ENCODE measurements at regions of chr19 and their contacts with region 1.

Region 1: DNA sequence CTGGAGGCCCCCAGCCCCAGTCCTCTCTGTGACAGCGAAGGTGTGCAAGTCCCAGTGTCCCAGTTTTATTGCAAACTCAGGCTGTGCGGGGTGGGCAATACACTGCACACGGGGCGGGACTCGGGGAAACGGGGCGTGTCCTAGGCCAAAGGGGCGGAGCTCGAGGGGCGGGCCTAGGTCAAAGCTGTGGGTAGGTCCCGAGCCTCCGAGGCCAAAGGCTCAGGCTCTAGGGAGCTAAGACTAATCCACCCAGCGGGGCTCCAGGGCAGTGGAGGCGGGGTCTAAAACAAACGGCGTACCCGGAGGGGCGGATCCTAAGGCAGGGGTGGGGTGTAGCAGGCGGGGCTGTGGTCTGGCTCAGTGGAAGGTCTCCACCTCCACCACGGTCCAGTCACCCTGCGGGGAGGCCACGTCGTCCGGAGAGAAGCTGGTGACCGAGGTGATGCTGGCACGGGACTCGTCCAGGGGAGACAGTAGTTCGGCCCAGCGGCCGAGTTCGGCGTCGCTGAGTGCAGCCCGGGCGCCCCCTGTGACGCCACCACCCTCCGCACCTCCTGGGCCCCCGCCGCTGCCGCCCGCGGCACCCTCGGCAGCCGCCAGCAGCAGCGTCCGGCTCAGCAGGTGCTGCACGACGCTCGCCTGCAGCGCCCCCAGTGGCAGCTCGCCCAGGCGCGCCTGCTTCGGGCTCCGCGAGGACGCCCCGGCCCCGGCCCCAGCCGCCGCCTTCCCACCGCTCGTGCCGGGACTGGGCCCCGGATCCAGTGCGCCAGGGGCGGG is 5.3 kb downstream of the PRR36 start:
- DNase-seq: peak; percentile 82
- H3K4me3 Mint-ChIP-seq: peak overlapping the region; percentile 60
- H3K27ac Mint-ChIP-seq: no peak overlapping the region
- H3K4me1 Mint-ChIP-seq: peaks cover 44% of the 10 kb centered on the region
- H3K27me3 Mint-ChIP-seq: peaks cover 50% of the 10 kb centered on the region

Region 2: GRCh38 chr19:7792253-7792652 is 76.6 kb before region 1 on chr19:
- CTCF ChIA-PET with region 1: no interaction called
- POLR2A ChIA-PET with region 1: no interaction called
- DNase-seq: no peak
- H3K4me3 Mint-ChIP-seq: no peak overlapping the region
- H3K27ac Mint-ChIP-seq: no peak overlapping the region
- H3K4me1 Mint-ChIP-seq: no peaks in the 10 kb centered on the region
- H3K27me3 Mint-ChIP-seq: peaks cover 35% of the 10 kb centered on the region

Region 3: DNA sequence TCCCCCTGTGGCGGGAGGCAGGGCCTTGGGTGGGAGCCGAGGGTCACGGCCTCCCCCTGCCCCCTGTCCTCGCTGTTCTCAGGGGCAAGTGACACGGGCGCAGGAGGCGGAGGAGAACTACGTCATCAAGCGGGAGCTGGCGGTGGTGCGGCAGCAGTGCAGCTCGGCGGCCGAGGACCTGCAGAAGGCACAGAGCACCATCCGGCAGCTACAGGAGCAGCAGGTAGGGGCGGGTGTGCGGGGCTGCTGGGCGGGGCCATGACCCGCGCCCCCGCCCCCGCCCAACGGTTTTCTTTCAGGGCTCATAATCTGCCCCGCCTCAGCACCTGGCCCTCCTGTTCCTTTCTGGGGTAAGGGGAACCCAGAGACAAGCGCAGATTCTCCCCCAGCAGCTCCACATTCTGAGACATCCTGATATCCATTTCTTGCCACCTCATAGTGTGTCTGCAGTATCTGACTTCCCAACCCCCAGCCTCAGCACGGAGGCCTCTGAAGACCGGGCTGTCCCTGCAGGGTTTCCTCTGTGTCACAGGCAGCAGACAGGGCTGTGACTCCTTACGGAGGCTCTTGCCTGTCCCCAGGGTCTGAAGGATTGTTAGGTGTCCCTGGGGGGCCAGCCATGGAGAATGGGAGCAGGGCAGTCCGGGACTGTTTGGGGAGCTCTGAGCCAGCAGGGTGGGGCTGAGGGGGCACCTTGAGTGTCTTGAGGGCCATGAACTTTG is 10.6 kb before region 1 on chr19:
- CTCF ChIA-PET with region 1: interaction called, 25 read pairs
- POLR2A ChIA-PET with region 1: interaction called, 4 read pairs
- DNase-seq: no peak
- H3K4me3 Mint-ChIP-seq: no peak overlapping the region
- H3K27ac Mint-ChIP-seq: no peak overlapping the region
- H3K4me1 Mint-ChIP-seq: peaks cover 5% of the 10 kb centered on the region
- H3K27me3 Mint-ChIP-seq: peaks cover 7% of the 10 kb centered on the region

Region 4: DNA sequence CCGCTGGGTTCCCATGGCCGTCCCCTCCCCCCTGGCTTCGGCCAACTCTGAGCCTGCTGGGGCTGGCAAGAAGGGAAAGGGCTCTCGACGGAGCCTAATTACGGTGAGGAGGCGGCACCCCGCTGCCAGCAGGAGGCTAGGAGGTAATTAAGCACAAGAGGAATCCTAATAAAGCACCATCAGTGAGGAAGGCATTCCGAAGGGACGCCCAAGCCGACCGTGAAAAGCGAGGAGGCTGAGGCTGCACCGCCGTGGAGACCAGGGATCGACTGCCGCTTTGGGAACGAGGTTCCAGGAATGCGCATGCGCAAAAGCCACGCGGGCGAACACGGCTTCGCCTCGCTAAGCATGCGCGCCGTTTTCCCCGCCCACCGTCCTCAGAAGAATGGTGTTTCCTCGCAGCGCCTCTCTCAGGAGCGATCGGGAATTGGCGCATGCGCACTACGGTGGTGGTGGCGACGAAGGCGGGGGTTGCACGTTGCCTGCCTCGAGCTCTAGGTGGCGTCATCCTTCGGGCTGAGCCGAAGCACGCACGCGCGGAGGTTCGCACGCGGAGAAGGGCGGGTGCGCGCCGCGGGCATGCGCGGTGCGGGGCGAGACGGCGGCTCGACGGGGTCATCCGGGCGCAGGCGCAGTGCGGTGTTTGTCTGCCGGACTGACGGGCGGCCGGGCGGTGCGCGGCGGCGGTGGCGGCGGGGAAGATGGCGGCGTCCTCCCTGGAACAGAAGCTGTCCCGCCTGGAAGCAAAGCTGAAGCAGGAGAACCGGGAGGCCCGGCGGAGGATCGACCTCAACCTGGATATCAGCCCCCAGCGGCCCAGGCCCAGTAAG is 34.6 kb after region 1 on chr19 and contains the start of gene MAP2K7:
- CTCF ChIA-PET with region 1: interaction called, 24 read pairs
- POLR2A ChIA-PET with region 1: interaction called, 10 read pairs
- DNase-seq: peak; percentile 100
- H3K4me3 Mint-ChIP-seq: peak within 1 kb of the TSS; percentile 85
- H3K27ac Mint-ChIP-seq: peak within 1 kb of the TSS; percentile 89
- H3K4me1 Mint-ChIP-seq: peaks cover 30% of the 10 kb centered on the region
- H3K27me3 Mint-ChIP-seq: no peaks in the 10 kb centered on the region
- total RNA-seq, gene MAP2K7: 42.6 to 42.9 TPM